GM12878 (cell line): ENCODE measurements at regions of chr6 and their contacts with region 1.

Region 1: DNA sequence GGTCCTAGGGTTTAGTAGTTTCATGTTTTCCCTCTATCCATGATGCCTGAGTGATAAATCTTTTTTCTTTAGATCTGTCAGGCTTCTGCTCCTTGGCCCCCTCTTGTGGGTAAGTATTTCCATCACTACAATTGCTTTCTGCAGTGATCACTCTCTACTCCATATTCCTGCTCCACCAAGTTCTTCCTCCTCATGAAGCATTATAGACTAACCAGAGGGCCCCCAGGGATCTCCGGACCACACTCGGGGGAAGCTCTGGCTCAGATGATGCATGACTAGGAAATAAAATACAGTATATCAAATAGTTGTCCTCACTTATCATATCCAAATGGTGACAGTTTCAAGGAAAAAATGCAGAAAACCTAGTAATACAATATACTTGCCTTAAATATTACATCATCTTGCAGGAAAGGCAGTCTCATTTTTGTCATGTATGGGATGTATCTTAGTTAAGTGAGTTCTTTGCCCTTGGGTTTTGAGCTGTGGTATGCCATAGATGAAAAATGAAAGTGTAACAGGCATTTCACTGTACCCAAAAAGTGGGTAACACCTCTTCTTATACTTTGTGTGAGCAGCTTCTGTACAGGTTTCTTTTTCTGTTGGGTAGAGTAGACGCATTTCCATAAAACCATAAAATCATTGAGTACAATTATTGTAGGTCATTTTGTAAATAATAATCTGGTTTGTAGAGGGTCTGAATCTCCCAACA is 200.9 kb upstream of the EYA4 start:
- DNase-seq: no peak
- ATAC-seq: peak; percentile 38; the same call in 1 of the 3 replicates
- H3K4me3 ChIP-seq: no peak overlapping the region
- H3K27ac ChIP-seq: no peak overlapping the region
- H3K4me1 ChIP-seq: no peaks in the 10 kb centered on the region
- H3K27me3 ChIP-seq: no peaks in the 10 kb centered on the region
- CTCF ChIP-seq: peak in 2 of 3 experiments; percentile 26 to 34; a peak in 3 of 6 replicates
- EP300 ChIP-seq: no peak
- POLR2A ChIP-seq: no peak
- RAD21 ChIP-seq: peak; percentile 27

Region 2: GRCh38 chr6:132790450-132790849 is 249.8 kb before region 1 on chr6:
- CTCF ChIA-PET with region 1: no interaction called
- POLR2A ChIA-PET with region 1: no interaction called
- RAD21 ChIA-PET with region 1: no interaction called
- SMC1A ChIA-PET with region 1: no interaction called
- in situ Hi-C with region 1: no loop called
- intact Hi-C with region 1: no loop called
- DNase-seq: no peak
- ATAC-seq: no peak
- H3K4me3 ChIP-seq: no peak overlapping the region
- H3K27ac ChIP-seq: no peak overlapping the region
- H3K4me1 ChIP-seq: no peaks in the 10 kb centered on the region; the same call in 1 of the 2 replicates
- H3K27me3 ChIP-seq: no peaks in the 10 kb centered on the region
- CTCF ChIP-seq: no peak
- EP300 ChIP-seq: no peak
- POLR2A ChIP-seq: no peak
- RAD21 ChIP-seq: no peak

Region 3: GRCh38 chr6:132830334-132830751 is 209.9 kb before region 1 on chr6:
- CTCF ChIA-PET with region 1: interaction called, 3 read pairs
- POLR2A ChIA-PET with region 1: no interaction called
- RAD21 ChIA-PET with region 1: no interaction called
- SMC1A ChIA-PET with region 1: no interaction called
- in situ Hi-C with region 1: no loop called
- intact Hi-C with region 1: loop called (anchors 2 kb)
- DNase-seq: no peak
- ATAC-seq: peak; percentile 55
- H3K4me3 ChIP-seq: no peak overlapping the region
- H3K27ac ChIP-seq: no peak overlapping the region
- H3K4me1 ChIP-seq: no peaks in the 10 kb centered on the region
- H3K27me3 ChIP-seq: no peaks in the 10 kb centered on the region
- CTCF ChIP-seq: peak; percentile 25 to 53 (median 32); a peak in 4 of 6 replicates
- EP300 ChIP-seq: no peak
- POLR2A ChIP-seq: no peak
- RAD21 ChIP-seq: peak; percentile 82

Region 4: GRCh38 chr6:133026705-133027104 is 13.5 kb before region 1 on chr6:
- CTCF ChIA-PET with region 1: no interaction called
- POLR2A ChIA-PET with region 1: no interaction called
- RAD21 ChIA-PET with region 1: no interaction called
- SMC1A ChIA-PET with region 1: no interaction called
- in situ Hi-C with region 1: no loop called
- intact Hi-C with region 1: no loop called
- DNase-seq: no peak
- ATAC-seq: no peak
- H3K4me3 ChIP-seq: no peak overlapping the region
- H3K27ac ChIP-seq: no peak overlapping the region
- H3K4me1 ChIP-seq: no peaks in the 10 kb centered on the region
- H3K27me3 ChIP-seq: no peaks in the 10 kb centered on the region
- CTCF ChIP-seq: no peak
- EP300 ChIP-seq: no peak
- POLR2A ChIP-seq: no peak
- RAD21 ChIP-seq: no peak

Region 5: DNA sequence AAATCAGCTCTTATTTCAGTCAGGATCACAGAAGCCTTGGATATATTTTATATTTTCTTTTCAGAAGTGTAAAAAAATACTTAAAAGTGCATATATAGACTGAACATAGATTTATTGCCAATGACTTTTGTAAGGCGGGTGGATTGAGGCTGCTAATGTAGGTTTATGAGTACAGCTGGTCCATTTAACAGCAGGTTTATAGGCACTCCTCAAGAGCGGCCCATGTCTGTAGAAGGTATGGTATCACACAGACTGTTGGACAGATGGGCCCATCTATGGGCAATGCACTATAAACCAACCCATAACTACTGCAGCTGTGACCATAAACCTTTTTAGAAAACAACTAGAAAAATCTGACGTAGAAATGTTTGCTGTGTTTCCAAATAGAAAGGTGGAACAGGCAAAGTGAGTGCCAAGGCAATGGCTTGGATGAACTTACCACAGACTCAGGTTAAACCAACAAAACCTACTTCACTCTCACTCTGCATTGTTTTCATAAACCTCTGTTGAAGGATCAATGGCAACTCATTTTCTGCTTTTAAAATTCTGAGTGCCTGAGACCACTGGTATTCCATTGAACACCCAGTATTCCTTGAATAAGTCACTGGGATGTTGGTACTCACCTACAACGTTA is 30.3 kb after region 1 on chr6:
- CTCF ChIA-PET with region 1: no interaction called
- POLR2A ChIA-PET with region 1: no interaction called
- RAD21 ChIA-PET with region 1: no interaction called
- SMC1A ChIA-PET with region 1: no interaction called
- in situ Hi-C with region 1: no loop called
- intact Hi-C with region 1: no loop called
- DNase-seq: no peak
- ATAC-seq: no peak
- H3K4me3 ChIP-seq: no peak overlapping the region
- H3K27ac ChIP-seq: no peak overlapping the region
- H3K4me1 ChIP-seq: no peaks in the 10 kb centered on the region
- H3K27me3 ChIP-seq: no peaks in the 10 kb centered on the region
- CTCF ChIP-seq: no peak
- EP300 ChIP-seq: no peak
- POLR2A ChIP-seq: no peak
- RAD21 ChIP-seq: no peak

Region 6: DNA sequence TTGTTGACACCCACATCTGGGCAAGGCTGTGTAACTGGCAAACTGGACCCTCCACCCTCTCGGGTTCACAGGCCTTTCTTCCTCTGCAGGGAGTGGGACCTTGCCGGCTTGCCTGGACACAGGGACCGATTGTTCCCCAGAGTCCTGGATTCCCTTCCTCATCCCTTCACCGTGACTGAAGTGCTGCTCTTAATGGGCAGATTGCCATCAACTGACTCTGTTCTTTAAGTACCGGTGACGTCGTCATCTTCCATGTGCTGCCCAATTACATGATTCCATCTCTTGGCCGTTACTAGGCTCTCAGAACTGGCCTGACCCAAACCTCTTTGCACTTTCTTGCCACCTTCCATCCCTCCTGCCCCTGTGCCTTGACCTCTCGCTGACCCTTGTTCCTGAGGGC is 286.3 kb after region 1 on chr6:
- CTCF ChIA-PET with region 1: no interaction called
- POLR2A ChIA-PET with region 1: no interaction called
- RAD21 ChIA-PET with region 1: no interaction called
- SMC1A ChIA-PET with region 1: no interaction called
- in situ Hi-C with region 1: no loop called
- intact Hi-C with region 1: no loop called
- DNase-seq: no peak
- ATAC-seq: no peak
- H3K4me3 ChIP-seq: no peak overlapping the region
- H3K27ac ChIP-seq: no peak overlapping the region
- H3K4me1 ChIP-seq: no peaks in the 10 kb centered on the region
- H3K27me3 ChIP-seq: no peaks in the 10 kb centered on the region
- CTCF ChIP-seq: no peak
- EP300 ChIP-seq: no peak
- POLR2A ChIP-seq: no peak
- RAD21 ChIP-seq: no peak